GM10248 (cell line): ENCODE measurements at regions of chr9 and their contacts with region 1.

Region 1: DNA sequence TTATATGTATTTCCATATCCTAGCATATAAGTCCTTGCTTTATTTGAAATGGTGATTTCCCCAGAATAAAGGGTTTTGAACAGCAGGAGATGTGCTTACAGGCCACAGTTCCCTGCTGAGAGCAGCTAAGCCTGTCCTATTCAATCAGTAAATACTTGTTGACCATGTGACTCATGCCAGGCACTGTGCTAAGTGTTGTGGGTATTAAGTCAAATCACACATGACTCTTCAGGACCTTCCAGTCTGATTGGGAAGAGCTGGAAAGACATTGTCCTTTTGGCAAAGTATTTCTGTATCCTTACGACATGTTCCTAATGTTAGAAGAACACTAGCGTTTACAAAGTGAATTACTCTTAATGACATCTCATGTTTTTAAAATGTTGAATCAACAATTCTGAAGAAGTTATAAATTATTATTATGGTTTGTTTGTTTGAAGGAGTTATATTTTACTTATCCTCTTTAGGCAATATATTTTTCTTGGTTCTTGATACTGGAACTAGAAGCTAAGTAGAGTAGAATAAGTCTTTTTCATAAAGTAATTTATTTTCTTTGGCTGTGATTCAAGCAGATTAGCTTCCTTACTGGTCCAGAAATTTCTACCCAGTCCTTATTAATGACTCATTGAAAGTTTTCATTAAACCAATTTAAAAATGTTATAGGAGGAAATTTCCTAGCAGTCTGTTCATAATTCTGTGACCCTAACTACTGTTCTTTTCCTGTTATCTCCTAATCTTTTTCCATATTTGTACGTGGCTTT is 82.1 kb downstream of the GAPVD1 start:
- DNase-seq: no peak
- CTCF ChIP-seq: no peak

Region 2: DNA sequence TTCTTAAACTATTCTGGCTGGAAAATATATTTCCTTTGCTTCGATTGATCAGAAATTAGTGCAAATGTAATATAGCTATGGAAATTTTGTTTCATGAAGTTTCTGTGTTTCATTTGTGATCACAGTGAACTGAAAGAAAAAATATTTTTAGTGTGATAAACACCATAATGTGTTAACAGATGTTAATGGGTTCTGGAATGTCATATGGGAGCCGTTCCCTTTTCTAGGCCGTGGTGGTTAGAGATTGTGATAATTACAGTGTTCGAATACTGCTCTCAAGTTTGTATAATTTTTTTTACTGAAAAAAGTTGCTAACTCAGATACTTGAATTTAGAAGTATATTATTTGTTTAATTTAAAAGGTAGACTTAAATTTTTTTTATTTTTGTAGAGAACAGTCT is 62.8 kb before region 1 on chr9:
- CTCF ChIA-PET with region 1: no interaction called
- POLR2A ChIA-PET with region 1: no interaction called
- DNase-seq: no peak
- CTCF ChIP-seq: no peak

Region 3: DNA sequence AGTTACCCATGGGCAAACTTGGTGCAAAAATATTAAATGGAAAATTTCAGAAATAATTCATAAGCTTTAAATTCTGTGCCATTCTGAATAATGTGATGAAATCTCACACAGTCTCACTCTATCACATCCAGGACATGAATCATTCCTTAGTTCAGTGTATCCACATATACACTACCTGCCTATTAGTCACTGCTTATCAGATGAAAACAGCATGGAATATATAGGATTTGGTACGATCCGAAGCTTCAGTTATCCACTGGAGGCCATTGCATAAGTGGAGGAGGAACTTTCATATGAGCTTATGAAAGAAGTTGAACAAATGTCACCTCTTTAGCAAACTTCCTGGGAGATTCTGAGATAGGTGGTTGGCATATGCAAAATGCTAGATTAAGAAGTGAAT is 17.9 kb before region 1 on chr9:
- CTCF ChIA-PET with region 1: interaction called, 14 read pairs
- POLR2A ChIA-PET with region 1: no interaction called
- DNase-seq: no peak
- CTCF ChIP-seq: no peak

Region 4: DNA sequence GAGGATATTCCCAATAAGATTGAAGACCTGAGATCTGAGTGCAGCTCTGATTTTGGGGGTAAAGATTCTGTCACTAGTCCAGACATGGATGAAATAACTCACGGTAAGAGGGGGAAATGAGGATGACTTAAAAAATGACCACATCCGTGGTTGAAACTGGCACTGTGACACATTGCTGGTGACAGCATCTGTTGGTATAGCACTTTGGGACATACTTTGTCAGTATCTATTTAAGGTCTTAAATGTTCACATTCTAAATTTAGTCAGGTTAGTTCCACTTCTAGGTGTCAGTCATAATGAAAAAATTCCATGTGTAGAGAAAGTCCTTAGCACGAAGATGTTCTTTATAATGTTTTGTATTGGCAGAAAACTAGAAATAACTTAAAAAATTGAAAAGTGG is 11.2 kb before region 1 on chr9:
- CTCF ChIA-PET with region 1: interaction called, 14 read pairs
- POLR2A ChIA-PET with region 1: no interaction called
- DNase-seq: peak; percentile 46
- CTCF ChIP-seq: no peak